Endothelial cell of umbilical vein (primary cell): ENCODE measurements at regions of chr7 and their contacts with region 1.

Region 1: GRCh38 chr7:118183786-118184564 is at the start of gene LSM8:
- DNase-seq: peak; percentile 100
- H3K4me3 ChIP-seq: peak within 1 kb of the TSS; percentile 69 to 97 (median 89)
- H3K27ac ChIP-seq: peak within 1 kb of the TSS; percentile 88
- H3K4me1 ChIP-seq: peaks cover 18% of the 10 kb centered on the region
- H3K27me3 ChIP-seq: no peaks in the 10 kb centered on the region
- CTCF ChIP-seq: no peak
- POLR2A ChIP-seq: peak; percentile 78
- total RNA-seq, gene LSM8: 34.1 and 39.6 TPM in 2 replicates

Region 2: DNA sequence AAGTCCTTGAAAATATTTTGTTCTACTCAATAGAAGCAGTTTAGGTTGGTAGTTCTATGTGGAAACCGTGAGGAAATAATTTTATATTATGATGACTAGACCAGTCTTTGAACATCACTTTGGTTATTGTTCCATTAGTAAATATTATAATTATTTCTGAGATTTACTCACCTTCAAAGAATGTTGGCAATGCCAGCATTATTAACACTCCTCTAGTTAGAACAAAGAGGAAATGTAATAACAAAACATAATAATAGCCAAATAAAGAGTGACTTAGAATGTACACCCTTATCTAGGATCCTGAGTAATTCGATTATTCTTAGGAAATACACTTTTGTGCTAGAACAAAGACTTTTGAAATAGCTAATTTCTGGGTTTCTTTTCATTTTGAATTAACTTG is 583.1 kb before region 1 on chr7:
- CTCF ChIA-PET with region 1: no interaction called
- POLR2A ChIA-PET with region 1: no interaction called
- dilution Hi-C with region 1: no loop called
- intact Hi-C with region 1: loop called (anchors 5 kb)
- DNase-seq: peak; percentile 71
- H3K4me3 ChIP-seq: peak overlapping the region in 1 of 3 experiments; percentile 19
- H3K27ac ChIP-seq: peak overlapping the region; percentile 82
- H3K4me1 ChIP-seq: peaks cover 22% of the 10 kb centered on the region
- H3K27me3 ChIP-seq: no peaks in the 10 kb centered on the region
- CTCF ChIP-seq: no peak
- POLR2A ChIP-seq: no peak

Region 3: GRCh38 chr7:117982071-117983055 is 201.6 kb before region 1 on chr7:
- CTCF ChIA-PET with region 1: no interaction called
- POLR2A ChIA-PET with region 1: no interaction called
- dilution Hi-C with region 1: no loop called
- intact Hi-C with region 1: loop called (anchors 5 kb)
- DNase-seq: peak; percentile 76
- H3K4me3 ChIP-seq: no peak overlapping the region
- H3K27ac ChIP-seq: no peak overlapping the region
- H3K4me1 ChIP-seq: peaks cover 2% of the 10 kb centered on the region
- H3K27me3 ChIP-seq: no peaks in the 10 kb centered on the region
- CTCF ChIP-seq: no peak
- POLR2A ChIP-seq: no peak

Region 4: DNA sequence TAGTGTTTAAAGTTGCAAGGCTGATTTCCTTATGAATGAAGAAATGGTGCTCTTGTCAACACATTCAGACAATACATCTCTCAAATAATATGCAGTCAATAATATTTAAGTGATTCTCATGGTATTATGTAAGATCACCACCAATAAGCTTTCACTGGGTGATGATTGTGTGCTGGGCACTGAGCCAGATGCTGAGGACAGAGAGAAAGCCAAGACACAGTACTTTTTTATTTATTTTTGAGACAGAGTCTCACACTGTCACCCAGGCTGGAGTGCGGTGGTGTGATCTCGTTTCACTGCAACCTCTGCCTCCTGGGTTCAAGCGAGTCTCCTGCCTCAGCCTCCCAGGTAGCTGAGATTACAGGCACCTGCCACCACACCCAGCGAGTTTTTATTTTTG is 130.6 kb before region 1 on chr7:
- CTCF ChIA-PET with region 1: no interaction called
- POLR2A ChIA-PET with region 1: no interaction called
- dilution Hi-C with region 1: no loop called
- intact Hi-C with region 1: no loop called
- DNase-seq: no peak
- H3K4me3 ChIP-seq: no peak overlapping the region
- H3K27ac ChIP-seq: no peak overlapping the region
- H3K4me1 ChIP-seq: no peaks in the 10 kb centered on the region
- H3K27me3 ChIP-seq: no peaks in the 10 kb centered on the region
- CTCF ChIP-seq: no peak
- POLR2A ChIP-seq: no peak

Region 5: DNA sequence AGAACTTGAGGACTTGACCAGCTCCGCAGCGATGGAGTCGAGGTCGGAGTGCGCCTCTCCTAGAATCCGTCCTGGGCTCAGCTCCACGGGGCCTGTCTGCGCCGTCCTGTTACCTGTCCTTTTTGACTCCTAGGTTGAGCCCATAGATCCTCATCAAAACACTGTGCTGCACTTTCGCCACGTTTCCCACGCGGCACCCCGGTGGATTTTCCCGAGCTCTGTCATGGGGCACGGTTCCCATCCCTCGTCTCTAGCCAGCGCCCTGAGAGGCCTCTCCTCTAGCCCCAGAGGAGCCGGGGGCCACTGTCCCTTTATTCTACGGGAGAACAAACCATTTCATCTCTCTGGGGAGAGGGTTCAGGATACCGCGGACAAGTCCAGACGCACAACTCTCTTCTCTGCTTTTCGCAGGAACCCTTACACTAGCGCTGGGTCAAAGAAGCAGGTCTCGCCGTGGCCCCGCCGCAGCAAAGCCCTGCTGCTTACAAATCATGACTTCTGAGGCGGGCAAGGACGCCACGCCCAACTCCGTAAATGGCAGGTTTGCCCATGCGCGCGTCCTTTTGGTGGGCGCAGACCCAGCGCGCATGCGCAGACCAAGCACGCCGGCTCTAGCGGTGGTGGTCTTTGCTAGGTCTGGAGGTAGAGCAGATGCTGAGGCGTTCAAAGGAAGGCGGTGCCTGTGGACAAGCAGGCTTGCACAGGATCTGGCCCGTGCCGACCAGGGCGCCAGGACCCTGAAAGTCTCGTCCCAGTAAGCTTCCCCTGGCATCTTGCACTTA is 30.3 kb after region 1 on chr7:
- CTCF ChIA-PET with region 1: no interaction called
- POLR2A ChIA-PET with region 1: no interaction called
- dilution Hi-C with region 1: no loop called
- intact Hi-C with region 1: loop called (anchors 1 kb)
- DNase-seq: peak; percentile 90
- H3K4me3 ChIP-seq: peak overlapping the region; percentile 42 to 66 (median 44)
- H3K27ac ChIP-seq: no peak overlapping the region
- H3K4me1 ChIP-seq: peaks cover 3% of the 10 kb centered on the region
- H3K27me3 ChIP-seq: peaks cover 0 to 2% of the 10 kb centered on the region in 2 experiments
- CTCF ChIP-seq: no peak
- POLR2A ChIP-seq: peak; percentile 59